GM12878 (cell line): ENCODE measurements at regions of chr18 and their contacts with region 1.

Region 1: GRCh38 chr18:59308248-59308937 is 10.1 kb downstream of the CPLX4 start:
- DNase-seq: no peak
- ATAC-seq: peak; percentile 99
- H3K4me3 ChIP-seq: peak overlapping the region; percentile 55; the same call in 1 of the 2 replicates
- H3K27ac ChIP-seq: no peak overlapping the region
- H3K4me1 ChIP-seq: no peaks in the 10 kb centered on the region
- H3K27me3 ChIP-seq: peaks cover 3 to 4% of the 10 kb centered on the region in 2 experiments; a peak in 2 of 4 replicates
- CTCF ChIP-seq: peak; percentile 67 to 83 (median 82)
- EP300 ChIP-seq: no peak
- POLR2A ChIP-seq: no peak
- RAD21 ChIP-seq: peak; percentile 78

Region 2: GRCh38 chr18:59249205-59249774 is 59.1 kb before region 1 on chr18:
- CTCF ChIA-PET with region 1: interaction called, 17 read pairs
- POLR2A ChIA-PET with region 1: no interaction called
- RAD21 ChIA-PET with region 1: no interaction called
- SMC1A ChIA-PET with region 1: interaction called, 4 read pairs
- in situ Hi-C with region 1: no loop called
- intact Hi-C with region 1: loop called (anchors 1 kb)
- DNase-seq: no peak
- ATAC-seq: peak; percentile 73
- H3K4me3 ChIP-seq: no peak overlapping the region
- H3K27ac ChIP-seq: no peak overlapping the region
- H3K4me1 ChIP-seq: no peaks in the 10 kb centered on the region
- H3K27me3 ChIP-seq: peaks cover 0 to under 1% of the 10 kb centered on the region in 2 experiments; a peak in 1 of 4 replicates
- CTCF ChIP-seq: peak; percentile 69 to 74 (median 73)
- EP300 ChIP-seq: no peak
- POLR2A ChIP-seq: no peak
- RAD21 ChIP-seq: peak; percentile 70

Region 3: DNA sequence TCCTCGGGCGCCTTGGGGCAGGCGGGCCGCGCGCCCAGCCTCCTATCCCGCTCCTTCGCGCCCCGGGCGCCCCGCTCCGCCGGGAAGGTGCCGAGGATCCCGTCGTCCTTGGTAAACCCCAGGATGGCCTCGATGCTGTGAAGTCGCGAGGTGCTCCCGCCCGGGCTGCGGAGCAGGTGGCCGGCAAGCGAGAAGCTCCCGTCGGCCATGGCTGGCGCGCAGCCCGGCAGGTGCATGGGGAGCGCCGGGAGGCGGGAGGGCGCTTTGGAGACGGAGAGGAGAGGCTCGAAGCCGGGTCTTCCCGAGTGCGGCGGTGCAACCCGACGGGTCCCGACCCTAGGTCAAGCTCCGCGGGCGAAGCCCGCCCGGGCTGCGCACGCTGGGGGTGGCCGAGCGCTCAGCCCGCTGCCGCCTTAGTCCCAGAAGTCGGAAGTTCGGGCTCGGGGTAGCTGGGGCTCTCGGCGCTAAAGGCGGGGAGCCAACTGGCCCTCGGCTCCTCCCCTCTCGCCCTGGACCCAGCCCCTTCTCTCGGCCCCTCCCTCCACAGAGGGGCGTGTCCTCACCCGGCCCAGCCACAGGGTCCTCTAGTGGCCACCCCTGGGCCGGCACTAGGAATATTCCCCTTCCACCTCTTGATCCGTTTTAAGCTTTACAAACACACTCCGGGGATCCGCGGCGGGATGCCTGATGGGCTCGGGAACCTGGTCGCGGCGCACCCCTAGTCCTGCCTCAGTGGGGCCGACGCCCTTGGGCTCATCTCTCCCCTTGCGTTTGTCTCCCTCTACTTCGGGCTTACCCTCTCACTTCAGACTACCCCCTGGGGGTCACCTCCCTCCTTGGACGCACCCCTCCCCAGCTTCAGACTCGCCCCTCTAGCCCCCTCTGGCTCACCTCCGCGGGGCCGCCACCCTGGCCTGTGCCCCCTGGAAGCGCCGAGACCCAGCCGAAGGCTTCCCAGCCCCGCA is 35.1 kb before region 1 on chr18 and contains the start of gene RAX:
- CTCF ChIA-PET with region 1: no interaction called
- POLR2A ChIA-PET with region 1: no interaction called
- RAD21 ChIA-PET with region 1: no interaction called
- SMC1A ChIA-PET with region 1: no interaction called
- in situ Hi-C with region 1: no loop called
- intact Hi-C with region 1: no loop called
- DNase-seq: no peak
- ATAC-seq: peak; percentile 62
- H3K4me3 ChIP-seq: peak within 1 kb of the TSS; percentile 32; the same call in 1 of the 2 replicates
- H3K27ac ChIP-seq: no peak within 1 kb of the TSS
- H3K4me1 ChIP-seq: no peaks in the 10 kb centered on the region
- H3K27me3 ChIP-seq: peaks cover 23 to 41% of the 10 kb centered on the region in 2 experiments
- CTCF ChIP-seq: 0 out of 6 replicates have a peak, but pooled peaks of 1 of the 3 experiments have one; percentile 8
- EP300 ChIP-seq: no peak
- POLR2A ChIP-seq: no peak
- RAD21 ChIP-seq: no peak
- polyA plus RNA-seq, gene RAX: not detected

Region 4: DNA sequence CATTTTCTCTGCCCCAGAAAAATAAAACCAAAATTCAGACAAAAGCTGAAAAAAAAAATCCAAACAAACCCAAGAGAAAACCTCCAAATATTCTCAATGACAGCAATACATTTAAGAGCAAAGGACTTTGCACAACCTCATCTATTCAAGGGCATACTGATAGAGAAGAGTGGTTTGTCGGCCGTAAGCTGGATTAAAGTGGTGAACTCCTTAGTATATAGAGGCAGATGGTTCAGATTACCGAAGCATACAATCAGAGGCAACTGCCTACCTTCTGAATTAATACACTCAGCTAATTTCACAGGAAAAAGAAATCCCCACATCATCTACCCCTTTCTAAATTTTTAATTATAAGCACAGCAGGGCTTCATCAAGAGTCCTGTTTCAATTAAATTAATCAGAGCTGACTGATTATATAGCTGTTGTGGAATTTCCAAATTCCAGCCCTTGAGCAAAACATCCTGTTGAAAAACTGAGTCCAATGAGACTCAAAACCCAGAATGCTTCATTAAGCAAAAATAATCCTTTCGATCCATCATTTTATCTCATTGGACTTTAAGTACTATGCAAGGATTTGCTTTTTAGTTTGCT is 10.2 kb after region 1 on chr18 and contains the start of gene CPLX4:
- CTCF ChIA-PET with region 1: interaction called, 10 read pairs
- POLR2A ChIA-PET with region 1: no interaction called
- RAD21 ChIA-PET with region 1: interaction called, 3 read pairs
- SMC1A ChIA-PET with region 1: interaction called, 3 read pairs
- in situ Hi-C with region 1: no loop called
- intact Hi-C with region 1: no loop called
- DNase-seq: no peak
- ATAC-seq: no peak
- H3K4me3 ChIP-seq: no peak within 1 kb of the TSS
- H3K27ac ChIP-seq: no peak within 1 kb of the TSS
- H3K4me1 ChIP-seq: no peaks in the 10 kb centered on the region
- H3K27me3 ChIP-seq: peaks cover 0 to 5% of the 10 kb centered on the region in 2 experiments; a peak in 1 of 4 replicates
- CTCF ChIP-seq: no peak
- EP300 ChIP-seq: no peak
- POLR2A ChIP-seq: no peak
- RAD21 ChIP-seq: no peak
- polyA plus RNA-seq, gene CPLX4: not detected

Region 5: DNA sequence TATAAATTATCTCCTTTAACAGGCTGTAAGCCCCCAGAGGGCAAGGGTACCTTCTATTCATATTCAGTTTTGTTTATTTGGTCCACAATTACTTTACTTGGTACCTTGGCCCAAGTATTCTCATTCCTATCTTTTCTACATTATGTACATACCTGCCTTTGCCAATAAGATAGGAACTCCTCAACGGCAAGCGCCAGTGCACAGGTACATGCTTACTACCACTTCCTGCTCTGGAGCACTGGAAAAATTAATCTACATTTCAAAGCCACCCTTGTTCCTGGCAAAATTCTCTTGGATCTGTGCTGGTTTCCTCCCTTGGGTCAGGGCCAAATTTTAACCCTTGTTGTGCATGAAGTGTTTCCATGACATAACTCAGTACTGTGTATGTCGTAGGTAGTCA is 85.0 kb after region 1 on chr18:
- CTCF ChIA-PET with region 1: interaction called, 8 read pairs
- POLR2A ChIA-PET with region 1: no interaction called
- RAD21 ChIA-PET with region 1: no interaction called
- SMC1A ChIA-PET with region 1: interaction called, 72 read pairs
- in situ Hi-C with region 1: loop called (anchors 5 kb)
- intact Hi-C with region 1: no loop called
- DNase-seq: no peak
- ATAC-seq: no peak
- H3K4me3 ChIP-seq: no peak overlapping the region
- H3K27ac ChIP-seq: no peak overlapping the region
- H3K4me1 ChIP-seq: no peaks in the 10 kb centered on the region
- H3K27me3 ChIP-seq: no peaks in the 10 kb centered on the region
- CTCF ChIP-seq: no peak
- EP300 ChIP-seq: no peak
- POLR2A ChIP-seq: no peak
- RAD21 ChIP-seq: no peak